B cell (primary cell): ENCODE measurements at regions of chr14 and their contacts with region 1.

Region 1: GRCh38 chr14:73785873-73786695 is 65.5 kb upstream of the PTGR2 start:
- DNase-seq: peak; percentile 70
- ATAC-seq: peak; percentile 53
- H3K4me3 ChIP-seq: peak overlapping the region; percentile 72 to 89 (median 80)
- H3K4me3 Mint-ChIP-seq: peak overlapping the region; percentile 92
- H3K27ac ChIP-seq: peak overlapping the region; percentile 37 to 90
- H3K27ac Mint-ChIP-seq: peak overlapping the region; percentile 93
- H3K4me1 ChIP-seq: peaks cover 43 to 49% of the 10 kb centered on the region in 2 donors
- H3K4me1 Mint-ChIP-seq: peaks cover 59% of the 10 kb centered on the region
- H3K27me3 ChIP-seq: no peaks in the 10 kb centered on the region
- H3K27me3 Mint-ChIP-seq: no peaks in the 10 kb centered on the region
- CTCF ChIP-seq: peak; percentile 9

Region 2: DNA sequence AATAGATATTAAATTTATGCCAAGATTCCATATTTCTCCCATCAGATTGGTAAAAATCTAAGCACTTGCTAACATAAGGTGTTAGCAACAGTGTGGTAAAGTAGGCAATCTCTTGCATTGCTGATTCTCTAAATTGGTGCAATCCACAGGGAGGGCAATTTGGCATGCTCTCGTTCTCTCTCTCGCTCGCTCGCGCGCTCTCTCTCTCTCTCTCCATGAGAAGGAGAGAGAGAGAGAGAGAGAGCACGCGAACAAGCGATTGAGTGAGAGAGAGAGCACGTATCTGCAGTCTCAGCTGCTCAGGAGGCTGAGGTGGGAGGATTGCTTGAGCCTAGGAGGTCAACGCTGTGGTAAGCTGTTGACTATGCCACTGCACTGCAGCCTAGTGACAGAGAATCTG is 623.8 kb before region 1 on chr14:
- CTCF ChIA-PET with region 1: no interaction called
- POLR2A ChIA-PET with region 1: interaction called, 10 read pairs
- intact Hi-C with region 1: no loop called
- DNase-seq: no peak
- ATAC-seq: no peak
- H3K4me3 ChIP-seq: no peak overlapping the region
- H3K4me3 Mint-ChIP-seq: no peak overlapping the region
- H3K27ac ChIP-seq: no peak overlapping the region
- H3K27ac Mint-ChIP-seq: no peak overlapping the region
- H3K4me1 ChIP-seq: no peaks in the 10 kb centered on the region
- H3K4me1 Mint-ChIP-seq: no peaks in the 10 kb centered on the region
- H3K27me3 ChIP-seq: no peaks in the 10 kb centered on the region
- H3K27me3 Mint-ChIP-seq: no peaks in the 10 kb centered on the region
- CTCF ChIP-seq: no peak

Region 3: GRCh38 chr14:73644531-73645247 is 141.4 kb before region 1 on chr14 and contains the start of gene DNAL1:
- CTCF ChIA-PET with region 1: no interaction called
- POLR2A ChIA-PET with region 1: no interaction called
- intact Hi-C with region 1: loop called (anchors 5 kb)
- DNase-seq: peak; percentile 93
- ATAC-seq: peak; percentile 99
- H3K4me3 ChIP-seq: peak within 1 kb of the TSS; percentile 72 to 85 (median 77)
- H3K4me3 Mint-ChIP-seq: peak within 1 kb of the TSS; percentile 94
- H3K27ac ChIP-seq: peak within 1 kb of the TSS; percentile 45 to 91
- H3K27ac Mint-ChIP-seq: peak within 1 kb of the TSS; percentile 81
- H3K4me1 ChIP-seq: peaks cover 9 to 19% of the 10 kb centered on the region in 2 donors
- H3K4me1 Mint-ChIP-seq: peaks cover 17% of the 10 kb centered on the region
- H3K27me3 ChIP-seq: no peaks in the 10 kb centered on the region
- H3K27me3 Mint-ChIP-seq: no peaks in the 10 kb centered on the region
- CTCF ChIP-seq: no peak
- total RNA-seq, gene DNAL1: 6.3 and 10.7 TPM in 2 replicates

Region 4: GRCh38 chr14:73753959-73754882 is 31.9 kb before region 1 on chr14:
- CTCF ChIA-PET with region 1: interaction called, 113 read pairs
- POLR2A ChIA-PET with region 1: interaction called, 60 read pairs
- intact Hi-C with region 1: loop called (anchors 1 kb)
- DNase-seq: peak; percentile 89
- ATAC-seq: peak; percentile 56
- H3K4me3 ChIP-seq: peak overlapping the region; percentile 36 to 68 (median 48)
- H3K4me3 Mint-ChIP-seq: peak overlapping the region; percentile 88
- H3K27ac ChIP-seq: peak overlapping the region; percentile 86 to 90
- H3K27ac Mint-ChIP-seq: peak overlapping the region; percentile 94
- H3K4me1 ChIP-seq: peaks cover 86 to 94% of the 10 kb centered on the region in 2 donors
- H3K4me1 Mint-ChIP-seq: peaks cover 93% of the 10 kb centered on the region
- H3K27me3 ChIP-seq: no peaks in the 10 kb centered on the region
- H3K27me3 Mint-ChIP-seq: no peaks in the 10 kb centered on the region
- CTCF ChIP-seq: no peak

Region 5: DNA sequence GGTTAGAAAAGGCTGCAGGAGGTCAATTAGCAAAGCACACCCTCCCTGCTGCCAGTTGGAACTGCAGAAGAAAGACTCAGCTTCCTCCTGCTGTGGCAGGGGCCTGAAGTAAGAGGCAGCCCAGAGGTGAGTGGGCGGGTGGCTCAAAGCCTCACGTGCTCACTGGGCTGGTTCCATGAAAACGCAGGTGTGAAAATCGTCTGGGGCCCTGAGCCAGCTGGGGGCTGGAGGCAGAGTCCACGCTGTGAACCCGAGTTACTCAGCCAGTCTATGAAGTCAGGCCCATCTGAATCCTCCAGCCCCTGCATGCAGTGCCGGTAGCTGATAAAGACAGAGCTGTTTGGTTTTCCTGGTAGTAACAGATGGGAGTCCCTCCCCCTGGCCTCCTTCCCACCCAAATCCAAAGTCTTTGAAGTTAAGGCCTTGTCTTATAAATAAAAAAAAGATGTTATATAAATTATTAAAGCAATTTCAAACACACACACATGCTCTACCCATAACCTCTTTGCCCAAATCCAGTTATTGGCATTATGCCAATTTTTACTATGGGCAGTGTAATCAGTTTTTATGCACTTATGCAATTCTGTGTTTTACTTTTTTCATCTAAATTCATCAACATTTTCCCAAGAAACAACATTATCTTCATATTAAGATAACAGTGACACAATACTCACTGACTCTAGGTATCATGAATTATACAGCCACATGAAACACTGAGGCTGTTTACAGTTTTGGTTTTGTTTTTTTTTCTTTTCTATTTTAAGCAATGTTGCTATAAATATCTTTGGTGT is 14.0 kb before region 1 on chr14:
- CTCF ChIA-PET with region 1: interaction called, 34 read pairs
- POLR2A ChIA-PET with region 1: interaction called, 21 read pairs
- intact Hi-C with region 1: loop called (anchors 1 kb)
- DNase-seq: peak; percentile 89
- ATAC-seq: peak; percentile 61
- H3K4me3 ChIP-seq: peak overlapping the region in 3 of 5 experiments; percentile 5 to 52 (median 10)
- H3K4me3 Mint-ChIP-seq: peak overlapping the region; percentile 87
- H3K27ac ChIP-seq: peak overlapping the region; percentile 96 to 97
- H3K27ac Mint-ChIP-seq: peak overlapping the region; percentile 99
- H3K4me1 ChIP-seq: peaks cover 83 to 96% of the 10 kb centered on the region in 2 donors
- H3K4me1 Mint-ChIP-seq: peaks cover 76% of the 10 kb centered on the region
- H3K27me3 ChIP-seq: no peaks in the 10 kb centered on the region
- H3K27me3 Mint-ChIP-seq: no peaks in the 10 kb centered on the region
- CTCF ChIP-seq: no peak